Mammary epithelial cell (primary cell): ENCODE measurements at regions of chr9 and their contacts with region 1.

Region 1: GRCh38 chr9:121498150-121498486 is 1.5 kb downstream of the GGTA1 start:
- DNase-seq: peak; percentile 70
- H3K4me3 ChIP-seq: peak overlapping the region in 1 of 3 experiments; percentile 21
- H3K27ac ChIP-seq: no peak overlapping the region
- H3K4me1 ChIP-seq: peaks cover 21% of the 10 kb centered on the region
- H3K27me3 ChIP-seq: no peaks in the 10 kb centered on the region
- CTCF ChIP-seq: peak; percentile 74 to 76

Region 2: GRCh38 chr9:121439711-121440664 is 58.1 kb before region 1 on chr9:
- CTCF ChIA-PET with region 1: no interaction called
- dilution Hi-C with region 1: loop called (anchors 10 kb)
- in situ Hi-C with region 1: no loop called
- intact Hi-C with region 1: no loop called
- DNase-seq: no peak
- H3K4me3 ChIP-seq: no peak overlapping the region
- H3K27ac ChIP-seq: no peak overlapping the region
- H3K4me1 ChIP-seq: no peaks in the 10 kb centered on the region
- H3K27me3 ChIP-seq: peaks cover 5% of the 10 kb centered on the region
- CTCF ChIP-seq: no peak

Region 3: DNA sequence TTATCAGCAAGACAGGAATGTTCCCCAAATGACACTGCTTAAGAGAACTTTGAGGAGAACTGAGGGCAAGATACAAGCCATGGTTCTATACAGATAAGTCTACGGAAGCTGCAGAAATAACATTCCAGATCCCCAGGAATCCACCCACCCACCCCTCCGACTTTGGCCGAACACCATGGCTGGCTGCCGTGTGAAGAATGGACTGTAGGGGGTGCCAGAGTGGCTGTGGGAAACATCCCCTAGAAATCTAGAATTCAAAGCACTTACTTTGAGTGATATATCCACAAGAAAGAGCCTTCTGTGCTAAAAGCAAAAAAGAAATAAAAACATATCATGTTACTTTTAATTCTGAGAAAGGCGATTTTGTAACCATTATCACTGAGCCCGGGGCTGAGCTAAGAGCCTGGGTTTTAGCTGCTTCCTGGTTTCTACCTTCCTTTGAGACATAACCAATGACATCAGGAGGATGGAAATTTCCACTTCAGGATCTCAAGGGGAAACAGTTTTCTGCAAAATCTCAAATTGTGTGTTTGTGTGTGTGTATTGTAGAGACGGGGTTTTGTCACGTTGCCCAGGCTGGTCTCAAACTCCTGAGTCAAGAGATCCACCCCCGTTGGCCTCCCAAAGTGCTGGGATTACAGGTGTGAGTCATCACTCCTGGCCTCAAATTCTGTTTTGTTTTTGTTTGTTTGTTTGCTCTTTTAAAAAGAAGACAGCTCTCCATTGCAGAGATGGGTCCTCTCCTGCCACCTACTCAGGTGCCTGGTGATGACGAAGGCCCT is 34.9 kb before region 1 on chr9:
- CTCF ChIA-PET with region 1: no interaction called
- dilution Hi-C with region 1: no loop called
- in situ Hi-C with region 1: no loop called
- intact Hi-C with region 1: loop called (anchors 1 kb)
- DNase-seq: no peak
- H3K4me3 ChIP-seq: no peak overlapping the region
- H3K27ac ChIP-seq: no peak overlapping the region
- H3K4me1 ChIP-seq: no peaks in the 10 kb centered on the region
- H3K27me3 ChIP-seq: peaks cover 10% of the 10 kb centered on the region
- CTCF ChIP-seq: peak; percentile 59 to 74

Region 4: GRCh38 chr9:121538246-121538645 is 40.1 kb after region 1 on chr9:
- CTCF ChIA-PET with region 1: no interaction called
- dilution Hi-C with region 1: no loop called
- in situ Hi-C with region 1: no loop called
- intact Hi-C with region 1: loop called (anchors 2 kb)
- DNase-seq: no peak
- H3K4me3 ChIP-seq: no peak overlapping the region
- H3K27ac ChIP-seq: no peak overlapping the region
- H3K4me1 ChIP-seq: no peaks in the 10 kb centered on the region
- H3K27me3 ChIP-seq: no peaks in the 10 kb centered on the region
- CTCF ChIP-seq: peak; percentile 13 to 47

Region 5: GRCh38 chr9:121550569-121551512 is 52.7 kb after region 1 on chr9:
- CTCF ChIA-PET with region 1: no interaction called
- dilution Hi-C with region 1: no loop called
- in situ Hi-C with region 1: no loop called
- intact Hi-C with region 1: no loop called
- DNase-seq: peak; percentile 56
- H3K4me3 ChIP-seq: peak overlapping the region in 1 of 3 experiments; percentile 41
- H3K27ac ChIP-seq: no peak overlapping the region
- H3K4me1 ChIP-seq: peaks cover 10% of the 10 kb centered on the region
- H3K27me3 ChIP-seq: no peaks in the 10 kb centered on the region
- CTCF ChIP-seq: peak; percentile 82 to 92

Region 6: GRCh38 chr9:121609845-121610570 is 111.9 kb after region 1 on chr9:
- CTCF ChIA-PET with region 1: no interaction called
- dilution Hi-C with region 1: no loop called
- in situ Hi-C with region 1: no loop called
- intact Hi-C with region 1: no loop called
- DNase-seq: peak; percentile 87
- H3K4me3 ChIP-seq: no peak overlapping the region
- H3K27ac ChIP-seq: no peak overlapping the region
- H3K4me1 ChIP-seq: peaks cover 10% of the 10 kb centered on the region
- H3K27me3 ChIP-seq: no peaks in the 10 kb centered on the region
- CTCF ChIP-seq: peak in 1 of 2 donors; percentile 15

Region 7: GRCh38 chr9:122536138-122536537 is 1038.0 kb after region 1 on chr9:
- CTCF ChIA-PET with region 1: no interaction called
- dilution Hi-C with region 1: no loop called
- in situ Hi-C with region 1: no loop called
- intact Hi-C with region 1: no loop called
- DNase-seq: no peak
- H3K4me3 ChIP-seq: no peak overlapping the region
- H3K27ac ChIP-seq: no peak overlapping the region
- H3K4me1 ChIP-seq: no peaks in the 10 kb centered on the region
- H3K27me3 ChIP-seq: no peaks in the 10 kb centered on the region
- CTCF ChIP-seq: no peak